HCT116 (cell line): ENCODE measurements at regions of chr17 and their contacts with region 1.

Region 1: GRCh38 chr17:81379523-81379942 is 15.7 kb upstream of the BAHCC1 start:
- DNase-seq: peak; percentile 81
- ATAC-seq: peak; percentile 98
- H3K4me3 ChIP-seq: peak overlapping the region; percentile 47 to 62
- H3K27ac ChIP-seq: peak overlapping the region; percentile 56
- H3K4me1 ChIP-seq: peaks cover 10 to 19% of the 10 kb centered on the region in 2 experiments
- H3K27me3 ChIP-seq: no peaks in the 10 kb centered on the region
- CTCF ChIP-seq: peak in 1 of 3 experiments; percentile 10; a peak in 1 of 6 replicates
- POLR2A ChIP-seq: peak; percentile 78
- RAD21 ChIP-seq: no peak

Region 2: GRCh38 chr17:81365148-81365600 is 14.4 kb before region 1 on chr17:
- CTCF ChIA-PET with region 1: no interaction called
- POLR2A ChIA-PET with region 1: interaction called, 14 read pairs
- RAD21 ChIA-PET with region 1: no interaction called
- intact Hi-C with region 1: no loop called
- DNase-seq: peak; percentile 72
- ATAC-seq: peak; percentile 87
- H3K4me3 ChIP-seq: peak overlapping the region; percentile 47 to 61
- H3K27ac ChIP-seq: peak overlapping the region; percentile 68
- H3K4me1 ChIP-seq: peaks cover 45 to 51% of the 10 kb centered on the region in 2 experiments
- H3K27me3 ChIP-seq: peaks cover 4% of the 10 kb centered on the region; the same call in 1 of the 2 replicates
- CTCF ChIP-seq: no peak
- POLR2A ChIP-seq: peak; percentile 1
- RAD21 ChIP-seq: no peak

Region 3: GRCh38 chr17:81453712-81454111 is 74.2 kb after region 1 on chr17:
- CTCF ChIA-PET with region 1: no interaction called
- POLR2A ChIA-PET with region 1: no interaction called
- RAD21 ChIA-PET with region 1: no interaction called
- intact Hi-C with region 1: no loop called
- DNase-seq: no peak
- ATAC-seq: no peak
- H3K4me3 ChIP-seq: no peak overlapping the region
- H3K27ac ChIP-seq: no peak overlapping the region
- H3K4me1 ChIP-seq: no peaks in the 10 kb centered on the region
- H3K27me3 ChIP-seq: no peaks in the 10 kb centered on the region
- CTCF ChIP-seq: no peak
- POLR2A ChIP-seq: no peak
- RAD21 ChIP-seq: no peak